ENCODE measurements at regions of chr18 and their contacts with region 1.

Region 1: DNA sequence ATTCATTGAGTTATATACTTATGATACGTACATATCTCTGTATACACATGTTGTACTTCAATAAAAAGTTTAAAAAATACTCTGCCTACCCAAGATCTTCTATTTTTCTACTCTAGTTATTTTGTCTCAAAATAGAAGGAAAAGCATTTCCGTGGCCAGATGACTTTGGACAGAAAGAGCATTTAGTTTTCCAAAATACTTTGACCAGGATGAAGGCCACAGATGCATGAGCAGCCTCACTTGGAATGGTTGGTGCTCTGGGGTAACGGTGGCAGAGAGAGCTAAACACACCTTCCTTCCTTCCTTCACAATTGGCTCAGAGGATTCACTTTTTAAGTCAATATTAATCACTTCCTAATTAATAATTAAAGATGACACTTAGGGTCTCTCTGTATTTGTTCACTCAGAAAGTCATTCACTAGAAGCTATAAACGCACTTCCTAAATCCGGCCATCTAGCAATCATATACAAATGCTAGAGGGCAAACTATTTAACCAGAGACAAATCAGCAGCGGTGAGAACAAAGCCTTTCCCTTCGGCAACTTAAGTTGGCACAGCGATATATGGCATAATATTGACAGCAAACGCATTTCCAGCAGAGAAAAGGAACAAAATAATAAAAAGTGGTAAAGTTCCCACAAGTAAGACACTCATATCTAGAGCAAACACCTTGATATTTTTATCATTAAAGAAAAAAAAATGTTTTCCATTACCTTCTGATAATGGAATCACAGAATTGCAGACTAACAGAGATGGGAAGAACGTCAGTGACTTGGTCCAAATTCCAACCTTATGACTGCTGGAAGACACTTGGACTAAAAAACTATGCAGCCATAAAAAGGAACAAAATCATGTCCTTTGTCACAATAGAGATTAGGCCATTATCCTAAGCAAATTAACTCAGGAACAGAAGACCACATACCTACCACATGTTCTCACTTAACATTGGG is 55.9 kb upstream of the NARS1 start:
- DNase-seq: no peak
- H3K4me3 ChIP-seq: no peak overlapping the region
- H3K27ac ChIP-seq: no peak overlapping the region
- H3K4me1 ChIP-seq: no peaks in the 10 kb centered on the region
- H3K27me3 ChIP-seq: no peaks in the 10 kb centered on the region
- CTCF ChIP-seq: no peak

Region 2: DNA sequence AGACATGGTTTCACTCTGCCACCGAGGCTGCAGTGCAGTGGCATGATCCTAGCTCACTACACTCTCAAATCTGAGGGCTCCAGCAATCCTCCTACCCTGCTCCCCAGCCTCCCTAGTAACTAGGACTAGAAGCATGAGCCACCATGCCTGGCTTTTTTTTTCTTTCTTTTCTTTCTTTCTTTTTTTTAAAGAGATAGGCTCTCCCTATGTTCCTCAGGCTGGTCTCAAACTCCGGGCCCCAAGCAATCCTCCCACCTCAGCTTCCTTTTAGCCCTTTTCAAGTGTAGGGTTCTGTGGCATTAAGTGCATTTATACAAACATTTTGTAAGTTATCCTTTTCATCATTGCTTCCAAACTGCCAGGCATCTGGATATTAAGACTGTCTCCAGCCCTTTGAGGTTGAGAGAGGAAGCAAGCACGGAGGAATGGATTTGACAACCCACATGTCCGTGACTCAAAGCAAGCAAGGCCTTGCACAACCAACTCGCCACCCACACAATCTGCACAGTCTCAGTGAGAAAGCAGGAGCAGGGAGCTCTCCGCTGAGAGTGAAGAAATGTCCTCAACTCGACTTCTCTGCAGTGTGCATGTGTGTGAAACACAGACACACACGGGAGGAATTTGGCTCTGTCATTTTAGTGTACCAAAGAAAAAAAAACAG is 60.0 kb after region 1 on chr18:
- CTCF ChIA-PET with region 1: no interaction called
- dilution Hi-C with region 1: no loop called
- in situ Hi-C with region 1: no loop called
- intact Hi-C with region 1: loop called (anchors 5 kb)
- DNase-seq: peak; percentile 94
- H3K4me3 ChIP-seq: peak overlapping the region in 2 of 3 experiments; percentile 21 to 33
- H3K27ac ChIP-seq: peak overlapping the region; percentile 2
- H3K4me1 ChIP-seq: peaks cover 16% of the 10 kb centered on the region
- H3K27me3 ChIP-seq: no peaks in the 10 kb centered on the region
- CTCF ChIP-seq: no peak

Measured in mammary epithelial cell (primary cell).